ENCODE measurements at regions of chr6 and their contacts with region 1.

Region 1: GRCh38 chr6:143427109-143427817 is 23.2 kb downstream of the ADAT2 start:
- DNase-seq: no peak
- ATAC-seq: peak; percentile 100
- H3K4me3 ChIP-seq: no peak overlapping the region
- H3K27ac ChIP-seq: no peak overlapping the region
- H3K4me1 ChIP-seq: no peaks in the 10 kb centered on the region
- H3K27me3 ChIP-seq: no peaks in the 10 kb centered on the region
- CTCF ChIP-seq: peak; percentile 94 to 98 (median 96); a peak in 5 of 6 replicates
- EP300 ChIP-seq: no peak
- POLR2A ChIP-seq: no peak
- RAD21 ChIP-seq: peak; percentile 100

Region 2: GRCh38 chr6:142474531-142475289 is 952.6 kb before region 1 on chr6:
- CTCF ChIA-PET with region 1: interaction called, 23 read pairs
- POLR2A ChIA-PET with region 1: interaction called, 3 read pairs
- RAD21 ChIA-PET with region 1: interaction called, 8 read pairs
- SMC1A ChIA-PET with region 1: interaction called, 6 read pairs
- in situ Hi-C with region 1: no loop called
- intact Hi-C with region 1: loop called (anchors 5 kb)
- DNase-seq: no peak
- ATAC-seq: peak; percentile 69
- H3K4me3 ChIP-seq: no peak overlapping the region
- H3K27ac ChIP-seq: no peak overlapping the region
- H3K4me1 ChIP-seq: no peaks in the 10 kb centered on the region
- H3K27me3 ChIP-seq: no peaks in the 10 kb centered on the region; a peak in 1 of 4 replicates
- CTCF ChIP-seq: peak; percentile 53 to 79 (median 64); a peak in 5 of 6 replicates
- EP300 ChIP-seq: no peak
- POLR2A ChIP-seq: no peak
- RAD21 ChIP-seq: peak; percentile 89

Region 3: DNA sequence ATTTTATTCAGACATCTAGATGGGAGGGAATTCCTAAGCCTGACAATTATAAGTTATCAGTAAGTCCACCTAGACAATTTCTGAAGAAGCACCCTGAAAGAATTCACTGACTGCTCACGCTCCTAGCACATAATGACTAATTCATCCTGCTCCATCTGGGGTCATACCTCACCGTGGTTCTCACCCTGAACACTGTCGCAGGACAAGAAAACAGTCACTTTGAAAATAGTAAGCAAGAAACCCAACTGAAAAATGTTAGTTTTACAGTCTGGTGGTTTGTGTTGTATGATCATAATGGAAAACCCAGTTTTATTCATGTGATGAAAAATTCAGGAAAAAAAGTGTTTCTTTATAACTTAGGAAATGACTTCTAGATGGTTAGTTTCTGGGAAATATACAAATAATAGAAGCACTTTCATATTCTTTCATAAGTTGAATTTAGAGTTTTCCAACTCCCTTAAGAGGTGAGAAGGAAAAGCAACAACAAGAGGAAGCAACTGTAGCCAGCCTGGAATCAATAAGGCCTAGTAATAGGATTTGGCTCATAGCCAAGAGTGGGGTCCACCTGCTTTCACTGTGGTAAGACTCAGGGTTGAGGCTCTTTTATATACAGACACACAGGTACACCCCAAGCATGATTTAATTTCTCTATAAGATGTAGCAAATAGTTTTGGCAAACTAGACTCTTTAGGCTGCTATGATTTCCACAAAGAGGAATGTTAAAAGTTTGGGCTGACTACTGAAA is 576.4 kb before region 1 on chr6:
- CTCF ChIA-PET with region 1: no interaction called
- POLR2A ChIA-PET with region 1: no interaction called
- RAD21 ChIA-PET with region 1: no interaction called
- SMC1A ChIA-PET with region 1: interaction called, 3 read pairs
- in situ Hi-C with region 1: no loop called
- intact Hi-C with region 1: loop called (anchors 5 kb)
- DNase-seq: peak; percentile 64
- ATAC-seq: peak; percentile 57
- H3K4me3 ChIP-seq: peak overlapping the region; percentile 26; the same call in 1 of the 2 replicates
- H3K27ac ChIP-seq: peak overlapping the region; percentile 98
- H3K4me1 ChIP-seq: peaks cover 95% of the 10 kb centered on the region
- H3K27me3 ChIP-seq: no peaks in the 10 kb centered on the region
- CTCF ChIP-seq: no peak
- EP300 ChIP-seq: peak; percentile 63 to 64; a peak in 3 of 4 replicates
- POLR2A ChIP-seq: 0 out of 2 replicates have a peak, but pooled peaks have one; percentile 37
- RAD21 ChIP-seq: peak; percentile 46

Region 4: GRCh38 chr6:143026696-143027449 is 400.4 kb before region 1 on chr6:
- CTCF ChIA-PET with region 1: interaction called, 5 read pairs
- POLR2A ChIA-PET with region 1: no interaction called
- RAD21 ChIA-PET with region 1: interaction called, 10 read pairs
- SMC1A ChIA-PET with region 1: interaction called, 4 read pairs
- in situ Hi-C with region 1: no loop called
- intact Hi-C with region 1: no loop called
- DNase-seq: no peak
- ATAC-seq: peak; percentile 76
- H3K4me3 ChIP-seq: no peak overlapping the region
- H3K27ac ChIP-seq: no peak overlapping the region
- H3K4me1 ChIP-seq: no peaks in the 10 kb centered on the region
- H3K27me3 ChIP-seq: no peaks in the 10 kb centered on the region
- CTCF ChIP-seq: peak; percentile 50 to 54 (median 50); a peak in 5 of 6 replicates
- EP300 ChIP-seq: no peak
- POLR2A ChIP-seq: no peak
- RAD21 ChIP-seq: peak; percentile 60

Region 5: DNA sequence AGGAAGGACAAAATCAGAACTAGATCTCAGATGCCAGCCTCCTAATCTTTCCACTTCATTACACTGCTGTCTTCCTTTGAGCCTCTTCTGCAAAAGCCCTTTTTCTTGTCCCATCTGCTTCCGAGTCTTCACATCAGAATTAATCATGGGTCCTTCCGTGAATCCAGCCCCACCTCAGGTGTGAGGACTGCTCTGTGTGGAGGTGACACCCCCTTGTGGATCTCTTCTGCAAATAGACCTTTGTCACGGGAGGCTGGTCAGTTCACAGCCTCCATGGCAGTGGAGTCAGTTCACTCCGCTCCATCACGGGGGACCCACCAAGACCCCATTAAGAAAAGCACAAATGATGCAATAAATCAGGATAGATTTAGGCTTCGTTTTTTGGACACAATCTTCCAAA is 147.9 kb before region 1 on chr6:
- CTCF ChIA-PET with region 1: interaction called, 5 read pairs
- POLR2A ChIA-PET with region 1: no interaction called
- RAD21 ChIA-PET with region 1: interaction called, 4 read pairs
- SMC1A ChIA-PET with region 1: interaction called, 5 read pairs
- in situ Hi-C with region 1: no loop called
- intact Hi-C with region 1: loop called (anchors 5 kb)
- DNase-seq: no peak
- ATAC-seq: peak; percentile 83
- H3K4me3 ChIP-seq: no peak overlapping the region
- H3K27ac ChIP-seq: no peak overlapping the region
- H3K4me1 ChIP-seq: peaks cover 7% of the 10 kb centered on the region; the same call in 1 of the 2 replicates
- H3K27me3 ChIP-seq: no peaks in the 10 kb centered on the region
- CTCF ChIP-seq: peak; percentile 37 to 58 (median 52); a peak in 4 of 6 replicates
- EP300 ChIP-seq: no peak
- POLR2A ChIP-seq: no peak
- RAD21 ChIP-seq: peak; percentile 69

Region 6: DNA sequence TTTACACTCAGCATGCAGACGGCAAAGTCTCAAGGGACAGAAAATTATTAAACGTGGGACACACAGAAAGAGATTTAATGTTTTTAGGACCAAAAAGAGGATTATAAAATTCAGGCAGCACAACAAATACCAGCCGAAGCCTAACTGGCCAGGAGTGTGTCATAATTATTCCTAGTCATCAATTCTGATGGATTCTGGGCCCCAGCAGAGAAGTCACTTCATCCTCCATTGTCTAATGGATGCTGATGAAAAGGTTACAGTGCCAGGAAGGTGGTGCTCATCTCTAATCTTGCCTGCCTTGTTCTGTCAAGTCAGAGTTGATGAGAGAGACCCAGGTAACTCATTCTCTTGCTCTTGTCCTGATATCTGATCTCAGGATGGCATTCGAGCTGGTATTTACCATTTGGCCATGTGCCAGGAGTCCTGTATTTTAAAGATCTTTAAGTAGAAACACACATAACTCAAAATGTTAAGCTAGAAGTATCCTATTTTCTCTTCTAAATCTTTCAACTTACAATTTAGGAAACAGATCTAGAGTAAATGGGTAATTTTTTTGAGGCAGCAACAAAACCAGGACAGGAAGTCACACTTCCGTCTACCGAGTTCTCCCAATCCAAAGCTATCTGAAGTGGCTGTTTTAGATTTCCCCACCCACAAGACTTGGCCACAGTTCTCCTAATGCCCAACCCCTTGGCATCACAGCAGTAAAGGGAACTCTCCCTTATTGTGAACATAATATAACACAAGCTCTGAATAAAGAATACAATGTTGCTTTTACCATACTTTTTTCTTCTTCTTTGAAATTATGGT is 26.8 kb before region 1 on chr6:
- CTCF ChIA-PET with region 1: interaction called, 10 read pairs
- POLR2A ChIA-PET with region 1: no interaction called
- RAD21 ChIA-PET with region 1: interaction called, 7 read pairs
- SMC1A ChIA-PET with region 1: interaction called, 6 read pairs
- in situ Hi-C with region 1: no loop called
- intact Hi-C with region 1: no loop called
- DNase-seq: no peak
- ATAC-seq: peak; percentile 82
- H3K4me3 ChIP-seq: no peak overlapping the region
- H3K27ac ChIP-seq: no peak overlapping the region
- H3K4me1 ChIP-seq: peaks cover 4% of the 10 kb centered on the region; the same call in 1 of the 2 replicates
- H3K27me3 ChIP-seq: no peaks in the 10 kb centered on the region
- CTCF ChIP-seq: no peak
- EP300 ChIP-seq: no peak
- POLR2A ChIP-seq: no peak
- RAD21 ChIP-seq: no peak

Region 7: GRCh38 chr6:143441680-143442545 is 14.7 kb after region 1 on chr6:
- CTCF ChIA-PET with region 1: interaction called, 10 read pairs
- POLR2A ChIA-PET with region 1: no interaction called
- RAD21 ChIA-PET with region 1: interaction called, 3 read pairs
- SMC1A ChIA-PET with region 1: interaction called, 3 read pairs
- in situ Hi-C with region 1: no loop called
- intact Hi-C with region 1: no loop called
- DNase-seq: no peak
- ATAC-seq: no peak
- H3K4me3 ChIP-seq: no peak overlapping the region
- H3K27ac ChIP-seq: no peak overlapping the region
- H3K4me1 ChIP-seq: no peaks in the 10 kb centered on the region
- H3K27me3 ChIP-seq: no peaks in the 10 kb centered on the region
- CTCF ChIP-seq: no peak
- EP300 ChIP-seq: no peak
- POLR2A ChIP-seq: no peak
- RAD21 ChIP-seq: no peak

Region 8: DNA sequence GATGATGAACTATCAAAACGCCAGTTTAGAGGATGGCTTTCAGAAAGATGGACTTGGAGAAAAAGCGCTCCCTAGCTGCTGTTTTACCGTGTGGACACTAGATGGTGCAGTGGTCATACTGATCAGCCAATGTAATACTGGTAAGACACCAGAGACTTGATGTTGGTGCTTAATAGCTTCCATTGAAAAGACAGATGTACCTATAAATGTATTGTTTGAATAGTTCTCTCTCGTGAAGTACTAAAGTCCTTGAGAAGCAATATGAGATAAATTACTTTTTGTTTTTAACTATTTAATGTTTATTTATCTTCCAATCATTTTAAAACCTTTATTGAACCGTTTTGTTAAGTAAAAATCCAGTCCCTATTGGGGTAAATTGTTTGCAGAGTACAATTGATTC is 148.2 kb after region 1 on chr6:
- CTCF ChIA-PET with region 1: no interaction called
- POLR2A ChIA-PET with region 1: no interaction called
- RAD21 ChIA-PET with region 1: no interaction called
- SMC1A ChIA-PET with region 1: no interaction called
- in situ Hi-C with region 1: no loop called
- intact Hi-C with region 1: no loop called
- DNase-seq: peak; percentile 27
- ATAC-seq: peak; percentile 94
- H3K4me3 ChIP-seq: no peak overlapping the region
- H3K27ac ChIP-seq: no peak overlapping the region
- H3K4me1 ChIP-seq: no peaks in the 10 kb centered on the region
- H3K27me3 ChIP-seq: no peaks in the 10 kb centered on the region; a peak in 2 of 4 replicates
- CTCF ChIP-seq: peak; percentile 63 to 81 (median 79)
- EP300 ChIP-seq: no peak
- POLR2A ChIP-seq: no peak
- RAD21 ChIP-seq: peak; percentile 89